ENCODE measurements at regions of chr16 and their contacts with region 1.

Region 1: GRCh38 chr16:10509534-10510025 is 70.8 kb downstream of the EMP2 start:
- DNase-seq: peak; percentile 64
- H3K4me3 ChIP-seq: no peak overlapping the region
- H3K27ac ChIP-seq: no peak overlapping the region
- H3K4me1 ChIP-seq: no peaks in the 10 kb centered on the region
- H3K27me3 ChIP-seq: no peaks in the 10 kb centered on the region
- CTCF ChIP-seq: peak; percentile 78 to 85

Region 2: DNA sequence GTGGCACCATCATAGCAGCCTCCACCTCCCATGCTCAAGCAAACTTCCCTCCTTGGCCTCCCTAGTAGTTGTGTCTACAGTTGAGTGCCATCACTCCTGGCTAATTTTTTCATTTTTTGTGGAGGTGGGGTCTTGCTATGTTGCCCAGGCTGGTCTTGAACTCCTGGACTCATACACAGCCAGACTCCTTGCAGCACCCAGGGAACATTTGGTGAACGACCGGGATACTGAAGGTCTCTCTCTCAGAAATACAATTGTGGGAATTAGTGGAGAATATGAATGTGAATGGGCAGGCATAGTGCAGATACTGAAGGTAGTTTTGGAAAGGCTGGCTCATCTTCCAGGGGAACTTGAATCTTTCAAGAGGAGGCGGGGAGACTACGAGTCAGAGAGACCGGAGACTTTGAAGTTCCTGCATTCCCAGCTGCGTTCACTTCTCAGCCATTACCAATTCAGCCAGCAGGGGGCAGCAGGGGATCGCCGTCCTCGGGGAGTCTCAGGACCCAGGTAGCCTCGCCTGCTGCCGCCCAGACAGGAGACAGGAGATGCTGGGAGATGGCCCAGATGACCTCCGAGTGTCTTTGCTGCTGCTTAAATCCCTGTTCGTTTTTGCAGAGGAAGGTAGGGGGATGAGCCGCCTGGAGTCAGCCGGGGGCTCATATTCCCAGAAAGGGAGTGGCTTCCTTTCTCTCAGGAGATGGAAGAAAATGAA is 1349.6 kb before region 1 on chr16:
- CTCF ChIA-PET with region 1: no interaction called
- dilution Hi-C with region 1: no loop called
- in situ Hi-C with region 1: loop called (anchors 25 kb)
- intact Hi-C with region 1: no loop called
- DNase-seq: peak; percentile 68
- H3K4me3 ChIP-seq: no peak overlapping the region
- H3K27ac ChIP-seq: no peak overlapping the region
- H3K4me1 ChIP-seq: no peaks in the 10 kb centered on the region
- H3K27me3 ChIP-seq: no peaks in the 10 kb centered on the region
- CTCF ChIP-seq: peak; percentile 84 to 86

Region 3: DNA sequence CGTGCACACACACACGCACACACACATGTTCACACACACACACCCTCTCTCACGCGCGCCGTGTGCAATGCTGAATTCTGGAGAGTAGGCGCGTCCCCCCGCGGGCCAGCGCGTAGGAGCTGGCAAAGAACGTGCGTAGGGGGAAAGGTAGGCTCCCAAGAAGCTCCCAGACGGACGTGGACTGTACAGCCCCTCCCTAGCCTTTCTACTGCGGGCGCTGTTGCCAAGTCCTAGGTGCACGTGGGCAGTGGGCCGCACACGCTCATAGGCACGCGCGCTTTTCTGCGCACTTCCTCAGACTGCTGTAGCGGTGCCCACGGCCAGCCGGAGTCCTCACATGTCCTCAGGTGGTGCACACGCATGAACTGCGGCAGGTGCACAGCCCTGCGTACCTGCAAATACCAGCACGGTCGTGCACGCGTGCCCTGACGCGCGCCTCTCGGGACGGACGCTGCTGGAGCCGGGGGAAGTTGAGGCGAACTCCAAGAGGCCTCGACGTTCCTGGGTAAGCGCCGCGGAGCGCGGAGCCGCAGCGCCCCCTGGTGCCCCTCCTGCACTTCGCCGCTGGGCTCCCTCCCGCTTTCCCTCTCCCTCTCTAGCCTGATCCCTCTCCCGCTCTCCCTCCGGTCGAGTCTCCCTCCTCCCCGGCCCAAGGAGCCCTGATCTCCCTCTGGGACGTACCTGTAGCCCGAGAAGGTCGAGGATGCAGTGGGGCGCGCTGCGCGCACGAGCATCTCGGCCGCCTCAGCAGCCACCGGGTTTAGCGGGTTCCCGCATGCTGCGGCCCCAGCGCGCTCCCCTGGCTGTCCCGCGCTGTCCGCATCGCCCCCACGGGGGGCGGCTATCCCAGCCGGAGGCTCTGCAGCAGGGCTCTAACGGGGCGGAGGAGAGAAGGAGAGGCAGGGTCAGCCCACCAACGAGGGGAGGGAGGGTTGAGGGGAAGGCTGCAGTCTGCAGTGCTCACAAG is 328.1 kb before region 1 on chr16:
- CTCF ChIA-PET with region 1: no interaction called
- dilution Hi-C with region 1: no loop called
- in situ Hi-C with region 1: no loop called
- intact Hi-C with region 1: loop called (anchors 1 kb)
- DNase-seq: peak; percentile 63
- H3K4me3 ChIP-seq: peak overlapping the region in 2 of 3 experiments; percentile 17 to 32
- H3K27ac ChIP-seq: no peak overlapping the region
- H3K4me1 ChIP-seq: peaks cover 31% of the 10 kb centered on the region
- H3K27me3 ChIP-seq: peaks cover 19% of the 10 kb centered on the region
- CTCF ChIP-seq: peak; percentile 68 to 96

Region 4: DNA sequence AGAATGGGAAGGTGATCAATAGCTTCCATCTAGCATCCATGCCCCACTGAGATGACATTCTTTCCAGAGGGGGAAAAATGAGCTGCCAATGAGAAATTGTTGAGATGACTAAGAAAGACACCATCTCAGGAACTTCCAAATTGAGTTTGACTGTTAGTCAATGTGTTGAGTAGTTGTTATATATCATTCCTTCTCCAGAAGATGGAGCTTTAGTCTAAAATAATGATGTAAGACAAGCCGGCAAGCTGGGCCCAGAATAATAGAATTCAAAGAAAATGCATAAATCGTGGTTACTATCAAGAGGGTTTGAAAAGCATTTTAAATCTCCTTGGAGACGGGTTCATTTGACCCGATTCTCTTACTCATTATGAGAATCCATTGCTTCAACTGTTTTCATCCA is 194.8 kb before region 1 on chr16:
- CTCF ChIA-PET with region 1: interaction called, 7 read pairs
- dilution Hi-C with region 1: no loop called
- in situ Hi-C with region 1: loop called in 1 of 2 experiments (anchors 5 kb)
- intact Hi-C with region 1: loop called (anchors 1 kb)
- DNase-seq: peak; percentile 53
- H3K4me3 ChIP-seq: no peak overlapping the region
- H3K27ac ChIP-seq: no peak overlapping the region
- H3K4me1 ChIP-seq: no peaks in the 10 kb centered on the region
- H3K27me3 ChIP-seq: no peaks in the 10 kb centered on the region
- CTCF ChIP-seq: peak; percentile 11 to 52

Region 5: GRCh38 chr16:10428433-10429168 is 81.0 kb before region 1 on chr16:
- CTCF ChIA-PET with region 1: no interaction called
- dilution Hi-C with region 1: no loop called
- in situ Hi-C with region 1: no loop called
- intact Hi-C with region 1: loop called (anchors 1 kb)
- DNase-seq: peak; percentile 59
- H3K4me3 ChIP-seq: no peak overlapping the region
- H3K27ac ChIP-seq: peak overlapping the region; percentile 82
- H3K4me1 ChIP-seq: peaks cover 13% of the 10 kb centered on the region
- H3K27me3 ChIP-seq: no peaks in the 10 kb centered on the region
- CTCF ChIP-seq: no peak

Region 6: GRCh38 chr16:10743610-10744393 is 234.2 kb after region 1 on chr16 and contains the start of gene NUBP1:
- CTCF ChIA-PET with region 1: no interaction called
- dilution Hi-C with region 1: no loop called
- in situ Hi-C with region 1: loop called in 1 of 2 experiments (anchors 5 kb)
- intact Hi-C with region 1: no loop called
- DNase-seq: peak; percentile 98
- H3K4me3 ChIP-seq: peak within 1 kb of the TSS; percentile 57 to 90 (median 74)
- H3K27ac ChIP-seq: peak within 1 kb of the TSS; percentile 86
- H3K4me1 ChIP-seq: peaks cover 10% of the 10 kb centered on the region
- H3K27me3 ChIP-seq: no peaks in the 10 kb centered on the region
- CTCF ChIP-seq: no peak
- total RNA-seq, gene NUBP1: 10.3 to 22.9 TPM

Region 7: DNA sequence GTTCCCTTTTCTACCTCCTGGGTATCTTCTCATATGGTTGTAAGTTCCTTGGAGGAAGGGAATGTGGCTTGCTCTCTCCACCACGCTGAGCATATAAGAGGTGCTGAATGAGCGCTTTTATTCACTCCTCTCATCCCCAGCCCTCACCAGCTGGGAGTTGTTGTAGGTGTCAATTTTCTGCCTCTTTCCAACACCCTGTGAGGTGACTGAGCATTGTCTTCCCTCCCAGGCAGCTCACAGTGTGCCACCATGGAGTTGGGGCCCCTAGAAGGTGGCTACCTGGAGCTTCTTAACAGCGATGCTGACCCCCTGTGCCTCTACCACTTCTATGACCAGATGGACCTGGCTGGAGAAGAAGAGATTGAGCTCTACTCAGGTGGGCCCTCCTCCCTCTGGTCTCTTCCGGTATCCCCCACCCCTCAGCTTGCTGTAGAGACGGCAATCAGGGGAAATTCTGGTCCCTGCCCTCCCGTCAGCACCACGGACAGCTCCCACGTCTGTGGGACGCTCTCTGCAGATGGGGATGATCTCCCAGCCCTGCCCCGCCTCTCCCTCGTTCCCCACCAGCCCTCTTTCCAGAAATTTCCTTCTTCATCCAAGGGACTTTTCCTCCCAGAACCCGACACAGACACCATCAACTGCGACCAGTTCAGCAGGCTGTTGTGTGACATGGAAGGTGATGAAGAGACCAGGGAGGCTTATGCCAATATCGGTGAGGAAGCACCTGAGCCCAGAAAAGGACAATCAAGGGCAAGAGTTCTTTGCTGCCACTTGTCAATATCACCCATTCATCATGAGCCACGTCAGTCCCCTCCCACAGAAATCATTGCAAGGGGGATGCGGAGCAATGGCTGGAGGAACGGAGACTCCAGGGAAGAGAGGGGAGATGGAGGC is 385.7 kb after region 1 on chr16:
- CTCF ChIA-PET with region 1: no interaction called
- dilution Hi-C with region 1: no loop called
- in situ Hi-C with region 1: no loop called
- intact Hi-C with region 1: no loop called
- DNase-seq: peak; percentile 12
- H3K4me3 ChIP-seq: no peak overlapping the region
- H3K27ac ChIP-seq: no peak overlapping the region
- H3K4me1 ChIP-seq: no peaks in the 10 kb centered on the region
- H3K27me3 ChIP-seq: no peaks in the 10 kb centered on the region
- CTCF ChIP-seq: no peak